A673 (cell line): ENCODE measurements at regions of chr9 and their contacts with region 1.

Region 1: GRCh38 chr9:127308652-127309429 is 44.3 kb downstream of the GARNL3 start:
- DNase-seq: peak; percentile 29
- H3K4me3 ChIP-seq: no peak overlapping the region
- H3K27ac ChIP-seq: no peak overlapping the region
- H3K4me1 ChIP-seq: peaks cover 9% of the 10 kb centered on the region
- H3K27me3 ChIP-seq: no peaks in the 10 kb centered on the region
- CTCF ChIP-seq: no peak

Region 2: DNA sequence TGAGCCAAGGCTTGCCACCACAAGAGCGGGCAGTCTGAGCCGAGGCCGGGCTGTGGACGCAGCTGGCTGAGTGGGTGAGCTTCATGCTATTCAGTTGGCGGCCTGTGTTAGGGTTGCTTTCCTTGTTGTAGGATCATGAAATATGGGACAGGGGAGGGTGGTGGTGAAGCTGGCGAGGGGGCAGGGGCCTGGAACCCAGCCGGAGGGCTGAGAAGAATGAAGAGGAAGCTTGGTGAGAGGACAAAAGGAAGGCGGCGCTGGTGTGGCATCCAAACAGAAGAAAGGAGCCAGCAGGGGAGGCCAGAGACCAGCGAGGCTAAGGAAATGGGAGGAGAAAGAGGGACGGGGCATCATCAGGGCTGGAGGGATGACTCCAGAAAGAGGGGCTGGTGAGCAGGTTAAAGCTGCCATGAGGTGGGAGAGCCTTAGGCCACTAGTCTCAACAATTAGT is 375.9 kb before region 1 on chr9:
- CTCF ChIA-PET with region 1: interaction called, 12 read pairs
- POLR2A ChIA-PET with region 1: no interaction called
- intact Hi-C with region 1: no loop called
- DNase-seq: no peak
- H3K4me3 ChIP-seq: no peak overlapping the region
- H3K27ac ChIP-seq: no peak overlapping the region
- H3K4me1 ChIP-seq: no peaks in the 10 kb centered on the region
- H3K27me3 ChIP-seq: no peaks in the 10 kb centered on the region
- CTCF ChIP-seq: no peak